CD4-positive, alpha-beta T cell (primary cell): ENCODE measurements at regions of chr3 and their contacts with region 1.

Region 1: DNA sequence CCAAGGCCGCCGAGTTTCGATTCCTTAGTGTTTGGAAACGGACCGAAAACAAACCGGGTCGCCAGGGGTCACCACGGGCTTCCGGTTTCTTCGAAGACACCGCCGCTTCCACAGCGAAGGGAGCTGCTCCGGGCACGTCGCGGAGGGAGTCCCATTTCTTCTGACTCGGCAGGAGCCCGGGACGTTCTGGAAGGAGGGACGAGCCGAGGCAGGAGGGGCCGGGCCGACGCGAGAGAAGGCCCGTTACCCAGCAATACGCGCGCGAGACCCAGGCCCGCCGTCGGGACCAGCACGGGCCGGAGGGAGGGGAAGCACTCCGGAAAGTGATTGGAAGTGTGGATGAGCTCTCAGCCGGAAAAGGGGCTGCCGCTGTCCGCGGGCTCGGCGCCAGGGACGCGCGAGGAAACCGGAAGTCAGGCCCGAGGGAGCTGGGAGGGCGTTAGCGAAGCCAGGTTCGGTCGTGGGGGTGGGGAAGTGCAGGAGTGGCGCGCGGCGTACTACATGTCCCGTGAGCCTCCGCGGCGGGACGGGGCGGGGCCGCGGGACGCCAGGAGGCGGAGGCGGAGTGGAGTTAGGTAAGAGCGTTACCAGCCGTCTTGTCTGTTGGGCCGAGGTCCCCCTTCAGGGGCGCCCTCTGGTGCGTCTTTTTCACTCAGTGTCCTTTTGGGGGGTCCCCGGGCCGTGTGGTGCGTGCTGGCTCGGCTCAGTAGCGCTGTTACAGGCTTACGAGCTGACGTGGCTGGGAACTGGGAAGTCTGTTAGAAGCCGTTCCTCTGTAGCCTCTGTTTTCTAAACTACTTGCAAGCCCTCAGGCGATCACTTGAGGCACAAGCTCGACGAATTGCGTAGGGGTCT is at the starts of genes AZI2 and ZCWPW2:
- DNase-seq: peak; percentile 85 to 96 (median 90)
- ATAC-seq: peak; percentile 87
- H3K4me3 ChIP-seq: peak within 1 kb of the TSS; percentile 96
- H3K4me3 Mint-ChIP-seq: peak within 1 kb of the TSS; percentile 100
- H3K27ac ChIP-seq: peak within 1 kb of the TSS; percentile 91 to 99
- H3K27ac Mint-ChIP-seq: peak within 1 kb of the TSS; percentile 99
- H3K4me1 ChIP-seq: peaks cover 17% of the 10 kb centered on the region
- H3K4me1 Mint-ChIP-seq: peaks cover 55% of the 10 kb centered on the region
- H3K27me3 ChIP-seq: no peaks in the 10 kb centered on the region
- H3K27me3 Mint-ChIP-seq: no peaks in the 10 kb centered on the region
- CTCF ChIP-seq: peak; percentile 18
- total RNA-seq, gene AZI2: 27.4 to 31.5 TPM
- total RNA-seq, gene ZCWPW2: 0.27 to 0.28 TPM

Region 2: GRCh38 chr3:27368831-27369607 is 979.8 kb before region 1 on chr3 and contains the start of gene NEK10:
- CTCF ChIA-PET with region 1: interaction called, 5 read pairs
- POLR2A ChIA-PET with region 1: interaction called, 3 read pairs
- intact Hi-C with region 1: loop called (anchors 5 to 10 kb)
- DNase-seq: peak; percentile 84 to 96 (median 91)
- ATAC-seq: peak; percentile 96
- H3K4me3 ChIP-seq: peak within 1 kb of the TSS; percentile 73
- H3K4me3 Mint-ChIP-seq: peak within 1 kb of the TSS; percentile 91
- H3K27ac ChIP-seq: no peak within 1 kb of the TSS
- H3K27ac Mint-ChIP-seq: peak within 1 kb of the TSS; percentile 59
- H3K4me1 ChIP-seq: peaks cover 9% of the 10 kb centered on the region
- H3K4me1 Mint-ChIP-seq: peaks cover 15% of the 10 kb centered on the region
- H3K27me3 ChIP-seq: no peaks in the 10 kb centered on the region
- H3K27me3 Mint-ChIP-seq: no peaks in the 10 kb centered on the region
- CTCF ChIP-seq: peak; percentile 13
- total RNA-seq, gene NEK10: 0.61 to 0.77 TPM

Region 3: GRCh38 chr3:27632431-27633223 is 716.2 kb before region 1 on chr3:
- CTCF ChIA-PET with region 1: no interaction called
- POLR2A ChIA-PET with region 1: interaction called, 10 read pairs
- intact Hi-C with region 1: no loop called
- DNase-seq: peak; percentile 9 to 77 (median 40)
- ATAC-seq: peak; percentile 77
- H3K4me3 ChIP-seq: peak overlapping the region; percentile 72
- H3K4me3 Mint-ChIP-seq: peak overlapping the region; percentile 90
- H3K27ac ChIP-seq: peak overlapping the region in 1 of 2 donors; percentile 42
- H3K27ac Mint-ChIP-seq: peak overlapping the region; percentile 78
- H3K4me1 ChIP-seq: peaks cover 15% of the 10 kb centered on the region
- H3K4me1 Mint-ChIP-seq: peaks cover 33% of the 10 kb centered on the region
- H3K27me3 ChIP-seq: no peaks in the 10 kb centered on the region
- H3K27me3 Mint-ChIP-seq: no peaks in the 10 kb centered on the region
- CTCF ChIP-seq: no peak

Region 4: GRCh38 chr3:28241221-28242160 is 107.4 kb before region 1 on chr3 and contains the start of gene CMC1:
- CTCF ChIA-PET with region 1: interaction called, 3 read pairs
- POLR2A ChIA-PET with region 1: interaction called, 9 read pairs
- intact Hi-C with region 1: loop called in 1 of 2 experiments (anchors 2 kb)
- DNase-seq: peak; percentile 72 to 96 (median 88)
- ATAC-seq: peak; percentile 93
- H3K4me3 ChIP-seq: peak within 1 kb of the TSS; percentile 66
- H3K4me3 Mint-ChIP-seq: peak within 1 kb of the TSS; percentile 98
- H3K27ac ChIP-seq: peak within 1 kb of the TSS; percentile 27 to 69
- H3K27ac Mint-ChIP-seq: peak within 1 kb of the TSS; percentile 79
- H3K4me1 ChIP-seq: peaks cover 33% of the 10 kb centered on the region
- H3K4me1 Mint-ChIP-seq: peaks cover 49% of the 10 kb centered on the region
- H3K27me3 ChIP-seq: no peaks in the 10 kb centered on the region
- H3K27me3 Mint-ChIP-seq: no peaks in the 10 kb centered on the region
- CTCF ChIP-seq: no peak
- total RNA-seq, gene CMC1: 5.0 to 6.6 TPM

Region 5: DNA sequence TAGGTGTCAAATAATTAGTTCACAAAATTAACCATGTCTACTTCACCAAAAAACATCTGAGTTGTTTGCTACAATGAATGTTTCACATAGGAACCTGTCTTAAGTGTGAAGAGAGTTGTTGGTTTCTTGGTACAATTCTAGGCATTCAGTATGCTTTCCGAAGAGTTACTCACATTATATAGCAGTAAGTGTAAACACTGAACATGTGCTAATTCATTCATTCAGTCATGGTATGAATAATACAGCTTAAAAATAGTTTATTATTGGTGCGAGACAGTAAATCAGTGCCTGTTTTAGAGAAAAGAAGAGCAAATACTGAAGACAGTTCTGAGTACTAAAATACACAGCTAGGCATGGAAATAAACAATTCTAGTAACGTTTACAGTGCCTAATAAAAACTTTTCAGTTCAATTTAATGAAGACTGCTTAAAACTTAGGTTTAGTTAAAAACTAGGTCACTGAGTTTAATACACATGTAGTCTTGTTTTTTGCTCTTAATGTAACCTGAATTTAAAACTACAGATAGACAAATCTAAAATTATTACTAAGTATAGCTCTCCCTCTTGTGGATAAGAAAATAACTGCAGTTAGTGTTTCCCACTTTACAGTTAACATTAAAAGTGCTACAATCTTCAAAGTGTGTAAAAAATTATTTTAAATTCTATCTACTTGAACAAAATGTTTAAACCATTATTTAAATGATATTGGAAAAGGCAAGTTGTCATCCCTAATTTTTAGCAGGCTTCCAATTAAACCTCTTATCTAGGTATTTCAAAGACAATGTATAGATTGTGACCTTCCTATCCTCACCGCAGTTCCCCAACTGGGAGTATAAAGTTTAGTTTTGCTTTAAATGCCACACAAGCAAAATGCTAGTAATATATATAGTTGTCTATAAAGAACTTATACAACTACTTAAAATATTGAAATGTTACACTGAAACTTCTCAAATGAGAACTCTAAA is 20.4 kb before region 1 on chr3:
- CTCF ChIA-PET with region 1: interaction called, 7 read pairs
- POLR2A ChIA-PET with region 1: interaction called, 20 read pairs
- intact Hi-C with region 1: no loop called
- DNase-seq: peak in 3 of 14 experiments; percentile 63 to 68 (median 68)
- ATAC-seq: peak; percentile 43
- H3K4me3 ChIP-seq: no peak overlapping the region
- H3K4me3 Mint-ChIP-seq: no peak overlapping the region
- H3K27ac ChIP-seq: no peak overlapping the region
- H3K27ac Mint-ChIP-seq: no peak overlapping the region
- H3K4me1 ChIP-seq: no peaks in the 10 kb centered on the region
- H3K4me1 Mint-ChIP-seq: peaks cover 20% of the 10 kb centered on the region
- H3K27me3 ChIP-seq: no peaks in the 10 kb centered on the region
- H3K27me3 Mint-ChIP-seq: no peaks in the 10 kb centered on the region
- CTCF ChIP-seq: peak; percentile 83

Region 6: GRCh38 chr3:28334552-28334951 is 14.3 kb before region 1 on chr3:
- CTCF ChIA-PET with region 1: interaction called, 6 read pairs
- POLR2A ChIA-PET with region 1: interaction called, 28 read pairs
- intact Hi-C with region 1: no loop called
- DNase-seq: peak in 1 of 14 experiments; percentile 21
- ATAC-seq: no peak
- H3K4me3 ChIP-seq: no peak overlapping the region
- H3K4me3 Mint-ChIP-seq: no peak overlapping the region
- H3K27ac ChIP-seq: no peak overlapping the region
- H3K27ac Mint-ChIP-seq: no peak overlapping the region
- H3K4me1 ChIP-seq: peaks cover 4% of the 10 kb centered on the region
- H3K4me1 Mint-ChIP-seq: peaks cover 14% of the 10 kb centered on the region
- H3K27me3 ChIP-seq: no peaks in the 10 kb centered on the region
- H3K27me3 Mint-ChIP-seq: no peaks in the 10 kb centered on the region
- CTCF ChIP-seq: peak; percentile 39

Region 7: GRCh38 chr3:28376424-28376823 is 27.6 kb after region 1 on chr3:
- CTCF ChIA-PET with region 1: no interaction called
- POLR2A ChIA-PET with region 1: no interaction called
- intact Hi-C with region 1: no loop called
- DNase-seq: peak in 2 of 14 experiments; percentile 4 to 5
- ATAC-seq: no peak
- H3K4me3 ChIP-seq: no peak overlapping the region
- H3K4me3 Mint-ChIP-seq: no peak overlapping the region
- H3K27ac ChIP-seq: no peak overlapping the region
- H3K27ac Mint-ChIP-seq: no peak overlapping the region
- H3K4me1 ChIP-seq: no peaks in the 10 kb centered on the region
- H3K4me1 Mint-ChIP-seq: no peaks in the 10 kb centered on the region
- H3K27me3 ChIP-seq: no peaks in the 10 kb centered on the region
- H3K27me3 Mint-ChIP-seq: no peaks in the 10 kb centered on the region
- CTCF ChIP-seq: no peak